ENCODE measurements at regions of chr6 and their contacts with region 1.

Region 1: DNA sequence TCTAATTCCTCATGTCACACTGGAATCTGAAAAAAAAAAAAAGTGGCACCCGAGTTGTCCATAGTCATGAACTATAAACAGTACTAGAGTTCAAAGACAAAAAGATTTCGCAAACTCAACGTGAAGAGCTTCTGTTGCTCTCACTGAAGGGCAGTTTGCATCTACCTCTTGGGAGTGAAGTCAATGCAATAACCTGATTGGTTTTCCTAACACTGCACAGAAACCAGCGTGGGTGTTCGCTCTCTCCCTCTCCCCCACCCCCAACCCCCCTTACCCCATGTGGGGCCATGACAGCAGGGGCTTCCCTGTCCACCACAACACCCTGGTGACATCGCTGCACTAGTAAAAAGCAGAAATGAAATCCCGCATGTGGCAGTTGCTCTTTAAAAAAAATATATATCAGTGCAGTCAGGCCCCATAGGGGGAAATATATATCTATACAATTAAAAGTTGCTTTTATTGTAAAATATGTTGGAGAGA is 66.9 kb downstream of the GMPR start:
- DNase-seq: peak; percentile 37
- ATAC-seq: peak; percentile 96
- H3K4me3 Mint-ChIP-seq: peak overlapping the region; percentile 82
- H3K27ac Mint-ChIP-seq: peak overlapping the region; percentile 65
- H3K4me1 Mint-ChIP-seq: peaks cover 36% of the 10 kb centered on the region
- H3K27me3 Mint-ChIP-seq: no peaks in the 10 kb centered on the region
- CTCF ChIP-seq: no peak

Region 2: DNA sequence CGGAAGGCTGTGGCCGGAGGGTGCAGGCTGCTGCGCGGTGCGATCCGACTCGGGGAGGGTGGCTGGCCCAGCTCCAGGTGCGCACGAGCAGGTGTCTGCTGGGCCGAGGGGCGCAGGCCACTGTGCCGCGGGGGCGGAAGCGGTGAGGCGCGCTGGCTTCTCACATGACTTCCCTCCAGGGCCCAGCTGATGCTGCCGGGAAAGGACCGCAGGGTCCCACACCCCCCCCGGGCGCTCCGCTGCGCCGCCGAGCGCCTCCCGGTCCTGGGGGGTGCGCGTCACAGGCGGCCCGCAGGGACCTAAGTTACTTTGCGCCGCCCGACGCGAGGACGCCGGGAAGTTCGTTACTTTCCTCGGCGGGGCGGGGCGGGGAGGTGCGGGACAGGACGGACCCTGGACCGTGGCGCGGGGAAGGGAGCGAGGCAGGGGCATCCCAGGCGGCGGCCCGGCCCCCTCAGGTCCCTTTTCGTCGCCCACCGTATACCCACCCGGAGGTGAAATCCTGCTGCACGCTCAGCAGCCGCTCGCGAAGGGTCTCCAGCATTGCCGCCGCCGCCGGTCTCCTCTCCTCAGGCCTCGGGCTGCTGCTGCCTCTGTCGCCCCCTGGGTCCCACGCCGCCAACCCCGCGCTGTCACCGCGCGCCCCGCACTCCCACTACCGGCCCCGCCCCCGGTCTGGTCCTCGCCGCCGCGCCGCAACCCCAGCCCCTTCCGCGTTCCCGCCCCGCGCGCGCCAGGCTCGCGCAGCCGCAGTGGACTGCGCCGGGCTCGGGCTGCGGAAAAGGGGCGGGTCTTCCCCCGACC is 642.8 kb before region 1 on chr6 and contains the start of gene DTNBP1:
- CTCF ChIA-PET with region 1: no interaction called
- POLR2A ChIA-PET with region 1: no interaction called
- intact Hi-C with region 1: loop called (anchors 5 kb)
- DNase-seq: peak; percentile 94
- ATAC-seq: peak; percentile 73
- H3K4me3 Mint-ChIP-seq: peak within 1 kb of the TSS; percentile 87
- H3K27ac Mint-ChIP-seq: peak within 1 kb of the TSS; percentile 89
- H3K4me1 Mint-ChIP-seq: peaks cover 49% of the 10 kb centered on the region
- H3K27me3 Mint-ChIP-seq: no peaks in the 10 kb centered on the region
- CTCF ChIP-seq: no peak
- total RNA-seq, gene DTNBP1: 50.3 and 51.6 TPM in 2 replicates

Region 3: GRCh38 chr6:16238057-16238962 is 67.0 kb before region 1 on chr6 and contains the start of gene GMPR:
- CTCF ChIA-PET with region 1: no interaction called
- POLR2A ChIA-PET with region 1: no interaction called
- intact Hi-C with region 1: loop called (anchors 5 kb)
- DNase-seq: peak; percentile 57
- ATAC-seq: peak; percentile 87
- H3K4me3 Mint-ChIP-seq: peak within 1 kb of the TSS; percentile 91
- H3K27ac Mint-ChIP-seq: peak within 1 kb of the TSS; percentile 57
- H3K4me1 Mint-ChIP-seq: peaks cover 34% of the 10 kb centered on the region
- H3K27me3 Mint-ChIP-seq: peaks cover 24% of the 10 kb centered on the region
- CTCF ChIP-seq: no peak
- total RNA-seq, gene GMPR: 0.47 and 0.98 TPM in 2 replicates

Region 4: DNA sequence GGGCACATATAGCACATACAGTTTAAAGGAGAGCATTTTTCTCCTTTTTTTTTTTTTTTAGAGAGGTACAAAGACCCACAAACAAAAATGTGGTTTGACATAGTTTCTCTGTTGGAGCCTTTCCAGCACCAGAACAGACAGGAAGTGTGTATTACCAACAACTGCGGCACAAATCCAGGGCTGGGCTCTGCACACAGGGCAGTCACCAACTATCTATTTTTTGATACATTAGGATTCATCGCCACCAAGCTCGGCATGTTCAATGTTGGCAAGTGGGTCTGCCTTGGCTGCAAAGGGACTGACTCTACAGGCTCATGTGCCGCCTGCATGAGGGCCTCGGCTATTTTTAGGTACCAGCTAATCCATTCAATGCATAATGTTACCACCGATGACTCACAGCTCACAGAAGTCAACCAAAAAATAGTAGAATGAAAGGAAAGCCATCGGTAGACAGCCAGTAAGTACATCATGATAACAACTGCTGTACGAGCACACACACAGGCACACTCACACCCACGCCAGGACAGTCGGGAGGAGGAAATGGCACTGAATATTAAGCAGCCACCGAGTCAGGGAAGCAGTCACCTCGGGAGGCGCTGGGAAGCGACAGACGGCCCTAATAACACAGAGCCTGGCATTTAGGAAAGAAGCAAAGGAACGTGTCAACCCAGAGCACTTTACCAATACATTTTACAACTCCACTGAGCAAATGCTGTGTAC is 14.7 kb after region 1 on chr6:
- CTCF ChIA-PET with region 1: interaction called, 5 read pairs
- POLR2A ChIA-PET with region 1: interaction called, 6 read pairs
- intact Hi-C with region 1: loop called (anchors 1 kb)
- DNase-seq: no peak
- ATAC-seq: peak; percentile 67
- H3K4me3 Mint-ChIP-seq: peak overlapping the region; percentile 9
- H3K27ac Mint-ChIP-seq: peak overlapping the region; percentile 13
- H3K4me1 Mint-ChIP-seq: peaks cover 44% of the 10 kb centered on the region
- H3K27me3 Mint-ChIP-seq: no peaks in the 10 kb centered on the region
- CTCF ChIP-seq: no peak

Region 5: GRCh38 chr6:16602035-16602434 is 296.7 kb after region 1 on chr6:
- CTCF ChIA-PET with region 1: no interaction called
- POLR2A ChIA-PET with region 1: interaction called, 6 read pairs
- intact Hi-C with region 1: loop called (anchors 5 kb)
- DNase-seq: no peak
- ATAC-seq: peak; percentile 99
- H3K4me3 Mint-ChIP-seq: peak overlapping the region; percentile 12
- H3K27ac Mint-ChIP-seq: no peak overlapping the region
- H3K4me1 Mint-ChIP-seq: peaks cover 29% of the 10 kb centered on the region
- H3K27me3 Mint-ChIP-seq: no peaks in the 10 kb centered on the region
- CTCF ChIP-seq: no peak

Measured in activated B cell treated with CpG ODN at 0.5 μM for 24 hours (primary cell).